Activated CD4-positive, alpha-beta memory T cell treated with anti-CD3 and anti-CD28 coated beads for 36 hours (primary cell): ENCODE measurements at regions of chr10 and their contacts with region 1.

Region 1: DNA sequence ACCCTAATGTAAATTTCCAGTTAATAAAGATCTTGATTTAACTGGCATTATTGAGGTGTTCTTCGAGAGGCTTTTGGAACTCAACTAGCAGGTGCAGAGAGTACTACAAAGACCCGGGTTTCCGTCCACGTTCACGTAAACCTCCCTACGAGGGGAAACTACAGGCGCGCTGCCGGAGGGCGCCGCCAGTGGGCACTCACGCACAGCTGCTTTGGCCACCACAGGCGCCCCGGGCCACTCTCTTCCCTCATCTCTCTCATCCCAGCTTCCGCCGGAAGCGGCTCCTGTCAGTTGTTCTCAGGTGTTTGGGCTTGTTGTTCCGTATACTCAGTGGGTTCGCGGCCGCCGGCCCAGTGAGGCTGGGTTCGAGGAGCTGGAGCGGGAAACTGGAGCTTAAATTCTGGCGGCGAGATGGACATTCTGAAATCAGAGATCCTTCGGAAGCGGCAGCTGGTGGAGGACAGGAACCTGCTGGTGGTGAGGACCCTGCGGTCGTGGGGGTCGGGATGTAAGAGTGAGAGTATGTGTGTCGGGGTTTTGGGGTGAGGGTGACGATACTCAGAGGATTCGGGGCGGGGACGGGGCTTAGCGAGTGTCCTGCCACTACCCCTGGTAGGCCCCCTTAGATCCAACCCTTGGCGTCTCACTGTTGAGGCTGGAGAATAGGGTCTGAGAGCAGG is at the start of gene PRPF18:
- DNase-seq: peak; percentile 96
- H3K4me3 Mint-ChIP-seq: peak within 1 kb of the TSS; percentile 100
- H3K27ac Mint-ChIP-seq: peak within 1 kb of the TSS; percentile 70
- H3K4me1 Mint-ChIP-seq: peaks cover 26% of the 10 kb centered on the region
- H3K27me3 Mint-ChIP-seq: peaks cover 15% of the 10 kb centered on the region
- total RNA-seq, gene PRPF18: 21.9 to 25.1 TPM

Region 2: GRCh38 chr10:13160934-13161856 is 425.6 kb before region 1 on chr10 and contains the start of gene MCM10:
- CTCF ChIA-PET with region 1: no interaction called
- POLR2A ChIA-PET with region 1: no interaction called
- intact Hi-C with region 1: loop called (anchors 1 kb)
- DNase-seq: peak; percentile 99
- H3K4me3 Mint-ChIP-seq: peak within 1 kb of the TSS; percentile 85
- H3K27ac Mint-ChIP-seq: peak within 1 kb of the TSS; percentile 34
- H3K4me1 Mint-ChIP-seq: peaks cover 28% of the 10 kb centered on the region
- H3K27me3 Mint-ChIP-seq: no peaks in the 10 kb centered on the region
- total RNA-seq, gene MCM10: 70.6 to 74.2 TPM

Region 3: GRCh38 chr10:13348216-13349017 is 238.4 kb before region 1 on chr10 and contains the start of gene SEPHS1:
- CTCF ChIA-PET with region 1: no interaction called
- POLR2A ChIA-PET with region 1: no interaction called
- intact Hi-C with region 1: loop called (anchors 2 kb)
- DNase-seq: peak; percentile 91
- H3K4me3 Mint-ChIP-seq: peak within 1 kb of the TSS; percentile 94
- H3K27ac Mint-ChIP-seq: peak within 1 kb of the TSS; percentile 93
- H3K4me1 Mint-ChIP-seq: peaks cover 51% of the 10 kb centered on the region
- H3K27me3 Mint-ChIP-seq: no peaks in the 10 kb centered on the region
- total RNA-seq, gene SEPHS1: 57.2 to 57.6 TPM

Region 4: DNA sequence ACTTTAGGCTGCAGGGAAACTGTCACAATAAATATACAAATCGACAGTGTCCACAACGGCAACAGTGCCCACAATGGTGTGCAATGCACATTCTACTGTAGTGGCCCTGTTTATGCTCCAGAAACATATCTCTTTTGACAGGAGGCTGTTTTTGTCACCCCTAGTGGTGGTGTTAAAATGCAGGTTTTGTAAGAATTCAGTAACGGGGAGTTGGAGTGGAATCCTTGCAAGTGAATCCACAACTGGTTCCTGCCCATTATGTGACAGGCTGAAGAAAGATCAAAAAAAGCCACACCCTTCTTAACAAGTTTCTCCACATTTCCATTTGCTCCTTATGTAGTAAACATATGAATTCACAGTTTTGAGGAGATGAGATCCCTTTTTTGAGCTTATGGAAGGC is 116.5 kb before region 1 on chr10:
- CTCF ChIA-PET with region 1: no interaction called
- POLR2A ChIA-PET with region 1: no interaction called
- intact Hi-C with region 1: no loop called
- DNase-seq: no peak
- H3K4me3 Mint-ChIP-seq: no peak overlapping the region
- H3K27ac Mint-ChIP-seq: no peak overlapping the region
- H3K4me1 Mint-ChIP-seq: no peaks in the 10 kb centered on the region
- H3K27me3 Mint-ChIP-seq: no peaks in the 10 kb centered on the region

Region 5: DNA sequence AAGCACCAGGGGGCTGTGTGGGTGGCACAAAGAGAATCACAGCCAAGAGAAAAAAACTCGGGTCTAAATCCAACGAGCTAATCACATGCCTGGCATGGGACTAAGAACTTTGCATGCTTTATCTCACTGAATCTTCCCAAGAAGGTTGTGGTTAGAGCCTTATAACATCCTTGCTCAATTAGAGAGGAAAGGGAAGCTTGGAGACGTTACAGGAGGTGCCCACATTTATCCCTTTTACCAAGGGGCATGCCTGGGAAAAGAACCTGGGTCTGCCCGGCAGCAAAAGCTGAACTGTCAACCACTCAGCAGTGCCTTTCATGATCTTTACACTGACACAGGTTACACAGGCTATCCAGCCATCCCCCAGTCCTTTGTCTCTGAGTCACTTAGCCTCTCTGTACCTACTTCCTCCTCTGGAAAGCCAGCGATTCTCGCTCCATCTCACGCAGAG is 190.1 kb after region 1 on chr10:
- CTCF ChIA-PET with region 1: no interaction called
- POLR2A ChIA-PET with region 1: no interaction called
- intact Hi-C with region 1: loop called (anchors 2 kb)
- DNase-seq: no peak
- H3K4me3 Mint-ChIP-seq: no peak overlapping the region
- H3K27ac Mint-ChIP-seq: no peak overlapping the region
- H3K4me1 Mint-ChIP-seq: no peaks in the 10 kb centered on the region
- H3K27me3 Mint-ChIP-seq: peaks cover 16% of the 10 kb centered on the region

Region 6: GRCh38 chr10:14009371-14010100 is 422.7 kb after region 1 on chr10:
- CTCF ChIA-PET with region 1: no interaction called
- POLR2A ChIA-PET with region 1: no interaction called
- intact Hi-C with region 1: loop called (anchors 2 kb)
- DNase-seq: peak; percentile 80
- H3K4me3 Mint-ChIP-seq: peak overlapping the region; percentile 81
- H3K27ac Mint-ChIP-seq: peak overlapping the region; percentile 79
- H3K4me1 Mint-ChIP-seq: peaks cover 27% of the 10 kb centered on the region
- H3K27me3 Mint-ChIP-seq: no peaks in the 10 kb centered on the region